ENCODE measurements at regions of chr15 and their contacts with region 1.

Region 1: DNA sequence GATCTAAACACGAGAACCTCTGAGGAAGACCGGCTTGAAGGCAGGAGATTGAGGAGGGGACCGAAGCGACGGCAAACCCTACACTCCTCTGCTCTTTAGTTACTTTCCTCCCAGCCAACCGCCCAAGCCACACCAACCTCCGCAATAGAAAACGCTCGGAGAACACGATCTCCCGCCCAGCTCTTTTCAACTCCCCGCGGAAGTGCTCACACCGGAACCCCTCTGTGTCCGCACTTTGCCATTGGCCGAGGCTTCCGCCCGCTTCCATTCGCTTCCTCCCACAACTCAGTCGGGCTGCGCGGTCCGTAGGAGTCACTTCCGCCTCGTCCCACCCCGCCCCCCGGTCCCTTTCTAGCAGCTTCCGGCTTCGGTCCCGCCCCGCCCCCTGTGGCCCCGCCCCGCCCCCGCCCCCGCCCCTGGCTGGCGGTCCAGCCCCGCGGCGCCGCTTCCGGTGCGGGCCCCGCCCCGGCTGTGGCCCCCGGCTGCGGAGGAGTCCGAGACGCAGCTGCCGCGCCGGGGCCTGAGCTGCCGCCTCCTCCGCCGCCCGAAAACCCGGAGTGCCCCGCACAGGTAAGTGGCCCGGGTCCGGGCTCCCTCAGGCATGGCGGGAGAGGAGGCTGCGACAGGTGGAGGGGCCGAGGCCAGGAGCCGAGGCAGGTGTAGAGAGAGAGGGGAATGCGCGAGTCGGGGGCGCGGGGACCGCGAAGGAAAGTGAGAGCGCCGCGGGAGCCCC is at the start of gene ARID3B:
- DNase-seq: peak; percentile 72 to 95 (median 90)
- ATAC-seq: peak; percentile 94
- H3K4me3 ChIP-seq: peak within 1 kb of the TSS; percentile 98
- H3K4me3 Mint-ChIP-seq: peak within 1 kb of the TSS; percentile 90 to 99 (median 98)
- H3K27ac ChIP-seq: peak within 1 kb of the TSS; percentile 87
- H3K27ac Mint-ChIP-seq: peak within 1 kb of the TSS; percentile 84 to 99 (median 94)
- H3K4me1 ChIP-seq: peaks cover 18 to 34% of the 10 kb centered on the region in 2 donors
- H3K4me1 Mint-ChIP-seq: peaks cover 46 to 64% (median 55%) of the 10 kb centered on the region in 7 donors
- H3K27me3 ChIP-seq: no peaks in the 10 kb centered on the region
- H3K27me3 Mint-ChIP-seq: no peaks in the 10 kb centered on the region
- total RNA-seq, gene ARID3B: 29.5 to 45.4 (median 36.8) TPM

Region 2: DNA sequence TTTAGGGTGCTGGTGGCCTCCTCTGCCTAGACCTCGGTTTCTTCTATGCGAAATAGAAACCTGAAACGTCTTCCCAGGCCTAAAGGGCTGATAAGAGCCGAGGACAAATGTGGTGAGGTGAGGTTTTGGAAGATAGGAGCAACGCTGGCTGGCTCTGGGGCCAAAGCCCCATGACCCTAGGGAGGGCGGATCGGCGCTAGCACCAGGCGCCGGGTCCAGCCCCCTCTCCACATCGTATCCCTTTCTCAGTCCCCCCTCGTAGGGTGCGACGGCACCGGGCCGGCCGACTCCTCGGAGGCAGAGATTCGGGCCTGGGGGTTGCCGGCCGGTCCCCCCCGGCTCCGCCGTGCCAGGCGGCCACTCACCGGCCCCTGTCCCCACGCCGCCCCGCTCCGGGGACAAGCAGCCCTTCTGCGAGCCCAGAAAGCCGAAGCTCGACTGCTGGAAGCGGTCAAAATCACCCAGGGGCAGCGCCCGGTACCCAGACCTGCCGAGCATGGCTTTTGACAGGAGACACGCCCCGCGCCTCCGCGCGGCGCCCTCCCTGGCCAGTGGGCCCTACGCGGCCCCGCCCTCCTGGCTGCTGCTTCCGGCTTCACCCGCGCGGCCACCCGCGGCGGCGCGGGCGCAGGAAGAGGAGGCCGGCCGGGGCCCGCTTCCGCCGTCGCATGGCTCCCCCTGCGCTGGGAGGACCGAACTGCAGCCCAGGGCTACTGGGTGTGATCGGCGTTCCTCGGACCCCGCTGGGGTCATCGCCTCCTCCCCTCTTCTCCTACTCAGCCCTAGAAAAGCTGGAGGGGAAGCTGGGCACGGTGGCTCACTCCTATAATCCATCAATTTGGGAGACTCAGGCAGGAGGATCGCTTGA is 549.0 kb before region 1 on chr15 and contains the start of gene STOML1:
- CTCF ChIA-PET with region 1: no interaction called
- POLR2A ChIA-PET with region 1: no interaction called
- intact Hi-C with region 1: loop called (anchors 1 to 5 kb)
- DNase-seq: peak; percentile 85 to 99 (median 91)
- ATAC-seq: peak; percentile 91
- H3K4me3 ChIP-seq: peak within 1 kb of the TSS; percentile 68
- H3K4me3 Mint-ChIP-seq: peak within 1 kb of the TSS; percentile 82 to 100 (median 98)
- H3K27ac ChIP-seq: peak within 1 kb of the TSS; percentile 90
- H3K27ac Mint-ChIP-seq: peak within 1 kb of the TSS; percentile 72 to 99 (median 87)
- H3K4me1 ChIP-seq: peaks cover 33 to 35% of the 10 kb centered on the region in 2 donors
- H3K4me1 Mint-ChIP-seq: peaks cover 28 to 62% (median 49%) of the 10 kb centered on the region in 7 donors
- H3K27me3 ChIP-seq: no peaks in the 10 kb centered on the region
- H3K27me3 Mint-ChIP-seq: no peaks in the 10 kb centered on the region
- total RNA-seq, gene STOML1: 7.5 to 14.5 (median 12.3) TPM

Region 3: GRCh38 chr15:74402873-74403587 is 137.9 kb before region 1 on chr15:
- CTCF ChIA-PET with region 1: no interaction called
- POLR2A ChIA-PET with region 1: no interaction called
- intact Hi-C with region 1: no loop called
- DNase-seq: peak in 6 of 9 donors; percentile 26 to 80 (median 32)
- ATAC-seq: peak; percentile 75
- H3K4me3 ChIP-seq: peak overlapping the region; percentile 10
- H3K4me3 Mint-ChIP-seq: peak overlapping the region in 9 of 10 donors; percentile 19 to 67 (median 49)
- H3K27ac ChIP-seq: no peak overlapping the region
- H3K27ac Mint-ChIP-seq: peak overlapping the region in 7 of 9 donors; percentile 2 to 85 (median 49)
- H3K4me1 ChIP-seq: peaks cover 43 to 57% of the 10 kb centered on the region in 2 donors
- H3K4me1 Mint-ChIP-seq: peaks cover 40 to 70% (median 53%) of the 10 kb centered on the region in 7 donors
- H3K27me3 ChIP-seq: no peaks in the 10 kb centered on the region
- H3K27me3 Mint-ChIP-seq: no peaks in the 10 kb centered on the region

Region 4: DNA sequence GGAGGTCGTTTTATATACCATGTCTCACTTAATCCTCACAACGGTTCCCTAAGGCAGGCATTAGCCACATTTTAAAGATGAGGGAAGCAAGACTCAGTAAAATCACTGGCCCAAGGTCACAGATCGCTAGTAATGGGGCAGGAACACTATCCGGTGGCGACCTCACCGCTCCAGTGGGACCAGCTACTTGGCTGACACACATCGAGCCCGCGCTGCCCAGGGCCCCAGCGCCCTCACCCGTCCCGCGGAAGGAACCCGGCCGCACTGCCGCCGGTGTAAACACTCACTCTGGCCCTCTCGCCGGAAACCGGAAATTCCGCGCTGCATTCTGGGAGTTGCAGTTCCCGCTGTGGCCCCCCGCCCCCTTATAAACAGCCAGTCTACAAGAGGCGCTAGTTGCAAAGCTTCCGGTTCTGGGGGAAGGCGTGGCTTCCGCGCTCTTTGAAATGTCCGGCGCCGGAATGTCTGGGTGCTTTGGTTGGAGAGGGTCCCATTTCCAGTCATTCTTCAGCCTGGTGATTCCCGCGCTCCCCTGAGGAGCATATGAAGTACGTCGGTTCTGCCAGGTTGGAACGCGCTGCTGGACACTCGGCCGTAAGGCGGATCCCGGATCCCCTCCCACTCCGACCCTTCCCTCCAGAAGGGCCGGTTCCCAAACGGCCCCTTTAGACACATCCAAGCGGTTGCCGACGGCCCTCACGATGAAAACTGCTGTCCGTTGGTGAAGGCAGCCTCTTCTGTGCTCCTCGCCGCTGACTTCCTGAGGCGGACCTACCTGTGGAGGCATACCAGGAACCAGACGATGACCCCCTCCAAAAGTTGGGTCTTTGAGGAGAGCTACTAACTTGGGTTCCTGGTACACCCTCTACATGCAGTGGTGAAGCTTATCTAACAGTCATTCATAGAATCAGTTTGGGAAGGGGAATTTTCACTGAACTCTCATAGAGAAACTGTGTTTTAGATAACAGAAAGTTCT is 79.8 kb before region 1 on chr15 and contains the start of gene UBL7:
- CTCF ChIA-PET with region 1: no interaction called
- POLR2A ChIA-PET with region 1: interaction called, 5 read pairs
- intact Hi-C with region 1: loop called (anchors 1 kb)
- DNase-seq: peak; percentile 81 to 95 (median 90)
- ATAC-seq: peak; percentile 99
- H3K4me3 ChIP-seq: peak within 1 kb of the TSS; percentile 91
- H3K4me3 Mint-ChIP-seq: peak within 1 kb of the TSS; percentile 88 to 98 (median 92)
- H3K27ac ChIP-seq: peak within 1 kb of the TSS; percentile 86
- H3K27ac Mint-ChIP-seq: peak within 1 kb of the TSS; percentile 78 to 96 (median 92)
- H3K4me1 ChIP-seq: peaks cover 8 to 15% of the 10 kb centered on the region in 2 donors
- H3K4me1 Mint-ChIP-seq: peaks cover 25 to 62% (median 55%) of the 10 kb centered on the region in 7 donors
- H3K27me3 ChIP-seq: no peaks in the 10 kb centered on the region
- H3K27me3 Mint-ChIP-seq: no peaks in the 10 kb centered on the region
- total RNA-seq, gene UBL7: 20.2 to 50.7 (median 40.6) TPM

Region 5: GRCh38 chr15:74695597-74696397 is 154.9 kb after region 1 on chr15 and contains the start of gene EDC3:
- CTCF ChIA-PET with region 1: no interaction called
- POLR2A ChIA-PET with region 1: no interaction called
- intact Hi-C with region 1: loop called (anchors 1 to 10 kb)
- DNase-seq: peak; percentile 69 to 87 (median 84)
- ATAC-seq: peak; percentile 93
- H3K4me3 ChIP-seq: peak within 1 kb of the TSS; percentile 71
- H3K4me3 Mint-ChIP-seq: peak within 1 kb of the TSS; percentile 96 to 100 (median 100)
- H3K27ac ChIP-seq: peak within 1 kb of the TSS; percentile 86
- H3K27ac Mint-ChIP-seq: peak within 1 kb of the TSS; percentile 97 to 100 (median 99)
- H3K4me1 ChIP-seq: peaks cover 12 to 14% of the 10 kb centered on the region in 2 donors
- H3K4me1 Mint-ChIP-seq: peaks cover 27 to 54% (median 48%) of the 10 kb centered on the region in 7 donors
- H3K27me3 ChIP-seq: no peaks in the 10 kb centered on the region
- H3K27me3 Mint-ChIP-seq: peaks cover 0 to 3% (median 0%) of the 10 kb centered on the region in 5 donors
- total RNA-seq, gene EDC3: 29.0 to 45.3 (median 38.7) TPM

Region 6: DNA sequence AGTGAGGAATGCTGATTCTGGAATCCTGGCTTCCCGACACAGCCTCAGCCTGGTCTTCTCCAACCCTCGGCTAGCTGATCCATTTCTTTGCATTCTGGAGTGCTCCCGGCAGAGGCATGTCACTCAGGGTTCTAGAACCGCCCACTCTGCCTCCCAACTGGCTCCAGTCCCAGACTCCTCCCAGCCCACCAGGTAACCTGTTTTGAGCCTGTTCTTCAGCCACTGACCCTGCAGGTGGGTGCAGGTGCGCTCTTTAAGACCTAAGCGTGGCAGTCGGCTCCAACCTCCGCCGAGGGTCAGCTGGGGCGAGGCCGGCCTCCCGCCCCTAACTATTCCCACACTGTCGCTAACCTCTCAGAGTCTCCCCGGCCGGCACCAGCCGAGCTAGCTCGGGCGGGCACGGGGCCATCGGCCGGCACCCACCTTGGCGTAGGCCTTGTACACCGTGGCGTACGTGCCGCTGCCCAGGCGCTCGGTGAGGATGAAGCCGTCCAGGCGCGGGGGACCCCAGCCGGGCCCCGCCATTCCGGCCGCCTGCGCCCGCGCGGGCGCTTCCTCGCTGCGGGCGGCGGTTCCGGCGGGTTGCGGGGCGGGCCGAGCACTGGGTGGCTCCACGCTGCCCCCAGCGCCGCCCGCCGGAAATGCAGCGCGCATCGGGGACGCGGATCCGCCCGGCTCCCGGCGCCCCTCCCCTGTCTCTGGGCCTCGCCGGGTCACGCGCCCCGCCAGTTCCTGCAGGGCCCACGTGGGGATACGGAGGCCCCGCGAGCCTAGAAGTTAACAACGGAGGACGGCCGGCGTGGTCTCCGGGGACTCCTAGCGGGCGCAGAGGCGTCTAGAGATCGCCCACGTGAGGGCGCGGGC is 301.9 kb after region 1 on chr15 and contains the start of gene ULK3:
- CTCF ChIA-PET with region 1: no interaction called
- POLR2A ChIA-PET with region 1: no interaction called
- intact Hi-C with region 1: loop called in 1 of 2 experiments (anchors 2 kb)
- DNase-seq: peak; percentile 89 to 97 (median 93)
- ATAC-seq: peak; percentile 97
- H3K4me3 ChIP-seq: peak within 1 kb of the TSS; percentile 74
- H3K4me3 Mint-ChIP-seq: peak within 1 kb of the TSS; percentile 80 to 95 (median 90)
- H3K27ac ChIP-seq: peak within 1 kb of the TSS; percentile 79
- H3K27ac Mint-ChIP-seq: peak within 1 kb of the TSS; percentile 88 to 95 (median 94)
- H3K4me1 ChIP-seq: peaks cover 40 to 50% of the 10 kb centered on the region in 2 donors
- H3K4me1 Mint-ChIP-seq: peaks cover 26 to 62% (median 50%) of the 10 kb centered on the region in 7 donors
- H3K27me3 ChIP-seq: no peaks in the 10 kb centered on the region
- H3K27me3 Mint-ChIP-seq: no peaks in the 10 kb centered on the region
- total RNA-seq, gene ULK3: 53.2 to 106 (median 59.2) TPM

Region 7: DNA sequence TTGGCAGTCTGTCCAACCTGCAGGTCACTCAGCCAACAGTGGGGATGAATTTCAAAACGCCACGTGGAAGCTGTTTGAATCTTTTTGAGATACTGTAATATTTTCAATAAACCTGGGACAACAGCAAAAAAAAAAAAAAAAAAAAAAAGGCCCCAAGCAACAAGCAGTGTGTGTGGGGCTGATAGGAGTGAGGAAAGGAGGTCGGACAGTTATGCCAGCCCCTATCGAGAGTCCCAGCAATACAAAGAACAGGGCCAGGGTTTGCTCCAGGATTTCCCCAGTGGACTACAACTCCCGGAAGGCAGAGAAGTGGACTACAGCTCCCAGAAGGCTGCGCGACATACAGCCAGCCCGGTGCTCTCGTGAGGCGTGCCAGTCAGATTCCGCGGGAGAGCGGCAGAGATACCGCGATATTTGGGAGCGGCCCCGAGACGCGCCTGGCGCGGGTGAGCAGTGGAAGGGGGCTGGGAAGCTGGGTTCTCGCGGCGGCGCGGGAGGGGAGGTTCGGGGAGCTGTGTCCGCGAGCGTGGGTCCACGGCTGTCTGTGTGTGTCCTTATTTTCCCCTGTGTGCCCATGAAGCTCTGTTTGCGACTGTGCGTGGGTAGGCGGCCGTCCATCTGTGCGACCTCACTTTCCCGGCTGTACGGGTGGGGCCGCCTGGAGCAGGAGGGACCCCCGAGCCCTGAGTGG is 482.4 kb after region 1 on chr15 and contains the start of gene PPCDC:
- CTCF ChIA-PET with region 1: no interaction called
- POLR2A ChIA-PET with region 1: no interaction called
- intact Hi-C with region 1: loop called in 1 of 2 experiments (anchors 5 kb)
- DNase-seq: peak; percentile 79 to 94 (median 91)
- ATAC-seq: peak; percentile 100
- H3K4me3 ChIP-seq: peak within 1 kb of the TSS; percentile 84
- H3K4me3 Mint-ChIP-seq: peak within 1 kb of the TSS; percentile 81 to 99 (median 97)
- H3K27ac ChIP-seq: peak within 1 kb of the TSS; percentile 84
- H3K27ac Mint-ChIP-seq: peak within 1 kb of the TSS; percentile 87 to 98 (median 93)
- H3K4me1 ChIP-seq: no peaks in the 10 kb centered on the region
- H3K4me1 Mint-ChIP-seq: peaks cover 11 to 30% (median 26%) of the 10 kb centered on the region in 7 donors
- H3K27me3 ChIP-seq: no peaks in the 10 kb centered on the region
- H3K27me3 Mint-ChIP-seq: no peaks in the 10 kb centered on the region
- total RNA-seq, gene PPCDC: 11.7 to 31.3 (median 17.1) TPM